ENCODE measurements at regions of chr21 and their contacts with region 1.

Region 1: DNA sequence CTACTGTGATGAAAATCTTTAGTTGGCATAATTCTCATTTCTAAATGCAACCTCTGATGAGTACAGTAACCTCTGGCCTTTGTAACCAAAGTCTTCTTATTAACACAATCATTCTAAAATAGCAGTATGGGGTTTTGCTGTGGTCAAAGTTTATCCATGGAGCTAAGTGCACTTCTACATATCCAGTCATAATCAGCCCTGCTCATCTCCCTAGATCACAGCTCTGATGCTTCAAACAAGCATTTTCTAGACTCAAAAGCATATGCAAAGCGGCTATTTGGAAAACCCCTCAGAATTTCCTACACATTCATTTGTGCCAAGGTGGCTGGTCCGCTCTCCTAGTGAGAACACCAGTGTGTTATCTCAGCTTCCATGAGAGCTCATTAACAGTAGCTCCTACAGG is 418.6 kb downstream of the MRPL39 start:
- DNase-seq: no peak
- H3K4me3 ChIP-seq: no peak overlapping the region
- H3K27ac ChIP-seq: no peak overlapping the region
- H3K4me1 ChIP-seq: no peaks in the 10 kb centered on the region
- H3K27me3 ChIP-seq: no peaks in the 10 kb centered on the region
- CTCF ChIP-seq: no peak
- POLR2A ChIP-seq: no peak

Region 2: GRCh38 chr21:25176637-25177412 is 11.9 kb before region 1 on chr21:
- intact Hi-C with region 1: no loop called
- DNase-seq: no peak
- H3K4me3 ChIP-seq: no peak overlapping the region
- H3K27ac ChIP-seq: no peak overlapping the region
- H3K4me1 ChIP-seq: no peaks in the 10 kb centered on the region
- H3K27me3 ChIP-seq: no peaks in the 10 kb centered on the region
- CTCF ChIP-seq: no peak
- POLR2A ChIP-seq: no peak

Region 3: DNA sequence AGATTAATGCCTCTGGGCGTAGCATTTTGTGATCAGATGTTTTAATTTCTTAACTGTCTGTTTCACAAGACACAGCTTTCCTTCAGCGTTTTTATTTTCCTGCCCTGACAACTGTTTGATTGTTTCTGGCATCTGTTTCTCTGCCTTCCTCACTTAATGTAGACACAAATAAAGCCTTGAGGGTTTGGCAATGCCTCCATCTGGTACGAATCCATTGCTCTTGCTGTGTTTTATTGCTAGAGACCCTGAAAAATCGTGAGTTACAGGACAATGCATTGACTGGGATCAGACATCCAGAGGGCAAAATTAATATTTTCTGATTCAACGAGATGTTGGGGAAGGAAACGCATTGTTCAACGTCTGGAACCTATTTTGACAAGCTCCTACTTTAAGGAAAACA is 55.1 kb after region 1 on chr21:
- intact Hi-C with region 1: loop called (anchors 10 kb)
- DNase-seq: no peak
- H3K4me3 ChIP-seq: no peak overlapping the region
- H3K27ac ChIP-seq: no peak overlapping the region
- H3K4me1 ChIP-seq: no peaks in the 10 kb centered on the region
- H3K27me3 ChIP-seq: no peaks in the 10 kb centered on the region
- CTCF ChIP-seq: no peak
- POLR2A ChIP-seq: no peak